ENCODE measurements at regions of chr19 and their contacts with region 1.

Region 1: GRCh38 chr19:48795055-48795684 is 15.7 kb downstream of the BCAT2 start:
- DNase-seq: peak; percentile 92 to 96 (median 94)
- ATAC-seq: peak; percentile 99
- H3K4me3 ChIP-seq: peak overlapping the region; percentile 28 to 51
- H3K27ac ChIP-seq: peak overlapping the region; percentile 63 to 67
- H3K4me1 ChIP-seq: peaks cover 0 to 8% of the 10 kb centered on the region in 2 donors
- H3K27me3 ChIP-seq: no peaks in the 10 kb centered on the region
- CTCF ChIP-seq: peak; percentile 84 to 94

Region 2: DNA sequence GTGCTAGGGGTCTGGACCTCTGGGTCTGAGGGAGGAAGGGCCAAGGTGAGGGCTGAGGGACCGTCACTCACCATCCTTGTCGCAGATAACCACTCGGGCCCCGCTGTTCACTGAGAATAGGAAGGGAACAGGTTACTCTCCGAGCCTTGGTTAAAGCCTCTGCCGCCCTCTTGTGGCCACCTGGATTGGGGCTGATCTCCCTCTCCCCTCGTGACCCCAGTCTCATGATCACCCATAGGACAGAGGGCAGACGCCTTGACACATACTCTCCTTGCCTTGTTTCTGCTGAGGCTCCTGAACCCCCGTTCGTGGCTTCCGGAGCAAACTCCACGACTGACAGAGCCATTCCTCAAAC is 40.5 kb after region 1 on chr19:
- intact Hi-C with region 1: loop called (anchors 5 to 10 kb)
- DNase-seq: peak; percentile 74 to 95 (median 91)
- ATAC-seq: peak; percentile 96
- H3K4me3 ChIP-seq: peak overlapping the region; percentile 35 to 47
- H3K27ac ChIP-seq: peak overlapping the region; percentile 64 to 71
- H3K4me1 ChIP-seq: peaks cover 0 to 17% of the 10 kb centered on the region in 2 donors
- H3K27me3 ChIP-seq: peaks cover 0 to 16% of the 10 kb centered on the region in 2 donors
- CTCF ChIP-seq: peak; percentile 82 to 89

Region 3: DNA sequence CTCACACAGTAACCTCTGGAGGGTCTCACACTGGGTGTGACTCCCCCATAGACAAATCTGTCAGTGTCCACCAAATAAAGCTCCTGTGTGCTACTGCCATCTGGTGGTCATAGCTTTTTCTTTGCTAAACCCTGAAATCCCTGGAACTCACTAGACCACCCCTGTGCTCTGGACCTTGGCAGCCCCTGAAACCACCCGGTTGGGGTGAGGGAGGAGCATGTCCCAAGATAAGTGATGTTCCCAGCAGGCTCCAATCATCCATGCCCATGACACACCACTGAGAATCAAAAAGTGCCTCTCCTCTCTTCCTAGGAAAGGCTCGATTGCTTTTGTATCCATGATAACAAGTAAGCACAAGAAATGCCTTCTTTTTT is 47.6 kb after region 1 on chr19:
- intact Hi-C with region 1: loop called (anchors 5 to 10 kb)
- DNase-seq: peak in 2 of 4 donors; percentile 56 to 77
- ATAC-seq: peak; percentile 87
- H3K4me3 ChIP-seq: no peak overlapping the region
- H3K27ac ChIP-seq: no peak overlapping the region
- H3K4me1 ChIP-seq: no peaks in the 10 kb centered on the region
- H3K27me3 ChIP-seq: no peaks in the 10 kb centered on the region
- CTCF ChIP-seq: peak; percentile 70 to 78

Region 4: GRCh38 chr19:48858984-48859710 is 64.0 kb after region 1 on chr19:
- intact Hi-C with region 1: no loop called
- DNase-seq: peak in 2 of 4 donors; percentile 79 to 92
- ATAC-seq: peak; percentile 87
- H3K4me3 ChIP-seq: peak overlapping the region; percentile 11 to 42
- H3K27ac ChIP-seq: peak overlapping the region; percentile 6 to 50
- H3K4me1 ChIP-seq: peaks cover 0 to 12% of the 10 kb centered on the region in 2 donors
- H3K27me3 ChIP-seq: no peaks in the 10 kb centered on the region
- CTCF ChIP-seq: no peak